ENCODE measurements at regions of chr5 and their contacts with region 1.

Region 1: DNA sequence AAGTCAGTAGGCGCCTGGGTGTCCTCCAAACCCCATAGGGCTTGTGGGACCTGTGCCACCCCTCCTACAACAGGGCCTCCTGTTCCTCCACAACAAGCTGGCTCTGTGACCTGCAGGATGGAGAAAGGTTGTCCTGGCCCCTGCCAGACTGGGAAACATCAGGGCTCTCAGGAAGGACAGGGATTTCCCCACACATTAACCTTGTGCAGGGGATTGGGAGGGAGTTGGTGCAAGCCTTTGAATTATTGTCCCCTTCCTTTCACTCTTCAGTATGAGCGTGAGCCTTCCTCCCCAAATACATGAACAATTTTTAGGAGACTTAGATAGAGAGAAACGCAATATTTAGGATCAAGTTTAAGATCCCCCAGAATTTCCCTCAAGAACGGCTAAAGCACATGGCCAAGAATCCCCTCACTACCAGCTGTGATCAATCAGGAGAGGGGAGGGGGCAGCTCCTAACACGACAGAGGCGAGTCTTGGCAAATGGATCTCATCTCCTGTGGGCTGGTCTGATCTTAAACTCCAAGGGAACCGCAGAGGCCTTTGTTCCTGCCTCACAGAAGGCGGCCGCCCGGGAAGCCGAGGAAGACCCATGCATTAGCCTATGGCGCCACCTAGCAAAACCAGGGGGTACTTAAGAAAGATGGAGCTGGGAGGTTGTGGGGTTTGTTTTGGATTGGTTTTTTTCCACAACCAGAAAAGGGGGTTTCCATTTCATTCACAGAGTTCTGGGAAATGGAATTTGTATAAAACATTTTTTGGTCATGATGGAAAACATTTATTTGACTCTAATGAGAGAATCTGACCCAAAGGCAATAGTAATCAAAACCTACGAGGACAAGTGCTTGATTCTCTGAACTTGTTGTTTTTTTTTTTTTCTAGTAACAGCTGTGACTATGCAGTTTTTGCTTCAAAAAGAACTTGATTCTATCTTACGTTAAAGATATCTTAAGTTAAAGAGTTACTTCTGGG is 36.1 kb upstream of the OSMR start:
- DNase-seq: peak; percentile 92
- H3K4me3 ChIP-seq: no peak overlapping the region
- H3K27ac ChIP-seq: peak overlapping the region; percentile 55
- H3K27me3 ChIP-seq: no peaks in the 10 kb centered on the region
- CTCF ChIP-seq: peak; percentile 90

Region 2: DNA sequence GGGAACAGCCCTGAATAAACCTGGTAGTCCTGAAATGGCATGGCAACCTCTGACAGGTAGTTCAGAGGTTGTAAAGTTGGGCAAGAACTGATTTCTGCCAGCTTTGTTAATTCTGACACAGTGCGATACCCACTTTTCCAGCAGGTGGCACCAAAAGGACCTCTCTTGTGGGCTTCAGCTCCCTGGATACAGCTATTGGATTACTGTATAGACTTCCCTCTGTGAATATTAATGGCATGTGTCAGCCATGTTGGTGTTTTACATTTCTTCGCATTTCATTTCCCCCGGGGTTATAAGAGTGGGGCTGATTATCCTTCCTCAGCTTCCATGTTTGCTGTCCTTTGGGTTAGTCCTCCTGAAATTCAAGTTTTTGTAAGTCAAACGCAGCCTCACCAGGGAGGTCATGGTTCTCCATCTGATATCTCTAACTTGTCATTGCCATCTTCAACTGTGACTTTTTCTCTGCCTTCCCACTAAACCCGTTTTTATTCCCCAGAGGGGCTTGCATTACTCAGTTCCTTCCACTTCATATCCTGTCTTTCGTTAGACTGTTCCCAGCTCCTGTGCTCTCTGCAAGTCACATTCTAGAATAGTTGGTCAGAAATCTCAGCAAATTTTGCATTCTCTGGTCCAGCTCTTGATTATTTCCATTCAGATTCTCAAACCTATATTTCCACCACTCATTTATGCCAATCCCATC is 388.8 kb before region 1 on chr5:
- CTCF ChIA-PET with region 1: interaction called, 130 read pairs
- POLR2A ChIA-PET with region 1: interaction called, 5 read pairs
- DNase-seq: peak; percentile 29
- H3K4me3 ChIP-seq: no peak overlapping the region
- H3K27ac ChIP-seq: no peak overlapping the region
- H3K27me3 ChIP-seq: peaks cover 2% of the 10 kb centered on the region
- CTCF ChIP-seq: peak; percentile 86

Region 3: GRCh38 chr5:38453506-38453905 is 356.2 kb before region 1 on chr5:
- CTCF ChIA-PET with region 1: interaction called, 50 read pairs
- POLR2A ChIA-PET with region 1: no interaction called
- DNase-seq: no peak
- H3K4me3 ChIP-seq: no peak overlapping the region
- H3K27ac ChIP-seq: no peak overlapping the region
- H3K27me3 ChIP-seq: peaks cover 2% of the 10 kb centered on the region
- CTCF ChIP-seq: no peak

Region 4: GRCh38 chr5:38509185-38509584 is 300.5 kb before region 1 on chr5:
- CTCF ChIA-PET with region 1: interaction called, 13 read pairs
- POLR2A ChIA-PET with region 1: no interaction called
- DNase-seq: peak; percentile 36
- H3K4me3 ChIP-seq: no peak overlapping the region
- H3K27ac ChIP-seq: no peak overlapping the region
- H3K27me3 ChIP-seq: no peaks in the 10 kb centered on the region
- CTCF ChIP-seq: no peak

Region 5: GRCh38 chr5:38765399-38765861 is 44.2 kb before region 1 on chr5:
- CTCF ChIA-PET with region 1: interaction called, 12 read pairs
- POLR2A ChIA-PET with region 1: interaction called, 58 read pairs
- DNase-seq: peak; percentile 66
- H3K4me3 ChIP-seq: no peak overlapping the region
- H3K27ac ChIP-seq: no peak overlapping the region
- H3K27me3 ChIP-seq: peaks cover 2% of the 10 kb centered on the region
- CTCF ChIP-seq: no peak

Region 6: DNA sequence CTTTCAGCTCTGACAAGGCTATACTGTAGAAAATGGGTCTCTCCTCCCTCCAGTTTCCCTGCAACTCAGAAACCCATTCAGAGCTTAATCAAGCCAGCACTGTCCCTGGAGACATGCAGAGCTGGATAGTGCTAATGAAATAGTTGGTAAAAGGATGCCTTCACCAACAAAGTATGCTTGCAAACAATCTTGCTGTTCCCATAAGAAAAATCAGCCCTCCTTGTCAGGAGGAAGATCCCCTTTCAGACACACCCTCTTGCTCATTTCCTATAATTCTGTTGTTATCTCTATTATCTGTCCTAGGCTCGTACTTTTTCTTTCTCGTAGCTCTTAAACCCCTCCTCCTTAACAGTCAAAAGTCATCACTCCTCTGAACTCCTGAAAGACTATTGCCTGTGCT is 26.2 kb after region 1 on chr5:
- CTCF ChIA-PET with region 1: interaction called, 11 read pairs
- POLR2A ChIA-PET with region 1: no interaction called
- DNase-seq: no peak
- H3K4me3 ChIP-seq: no peak overlapping the region
- H3K27ac ChIP-seq: no peak overlapping the region
- H3K27me3 ChIP-seq: no peaks in the 10 kb centered on the region
- CTCF ChIP-seq: no peak

Measured in AG04450 (cell line).